MCF 10A (cell line): ENCODE measurements at regions of chr2 and their contacts with region 1.

Region 1: GRCh38 chr2:127526149-127527000 is at the start of gene IWS1:
- DNase-seq: peak; percentile 97
- H3K4me3 Mint-ChIP-seq: peak within 1 kb of the TSS; percentile 79
- H3K27ac Mint-ChIP-seq: peak within 1 kb of the TSS; percentile 95
- H3K4me1 Mint-ChIP-seq: peaks cover 17% of the 10 kb centered on the region
- H3K27me3 Mint-ChIP-seq: no peaks in the 10 kb centered on the region
- CTCF ChIP-seq: no peak
- total RNA-seq, gene IWS1: 56.8 and 57.0 TPM in 2 replicates

Region 2: DNA sequence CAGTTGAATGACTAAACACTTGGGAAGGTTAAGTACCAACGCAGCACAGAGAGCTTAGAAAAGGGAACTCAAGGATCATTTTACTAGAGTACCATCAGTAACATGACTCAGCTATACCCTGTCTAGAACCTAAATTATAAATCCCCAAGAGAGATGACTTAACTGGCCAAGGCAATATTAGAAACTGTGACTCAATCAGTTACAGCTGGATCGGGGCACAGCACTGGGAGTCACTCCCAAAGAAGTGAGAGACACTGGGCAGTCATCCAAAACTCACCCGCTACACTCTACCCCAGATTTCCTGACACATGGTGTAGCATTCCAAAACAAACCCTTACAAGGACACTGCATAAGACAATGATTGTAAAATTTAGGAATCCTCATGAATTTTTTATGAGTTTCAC is 17.7 kb before region 1 on chr2:
- CTCF ChIA-PET with region 1: interaction called, 5 read pairs
- POLR2A ChIA-PET with region 1: interaction called, 76 read pairs
- intact Hi-C with region 1: loop called (anchors 1 kb)
- DNase-seq: peak; percentile 98
- H3K4me3 Mint-ChIP-seq: no peak overlapping the region
- H3K27ac Mint-ChIP-seq: peak overlapping the region; percentile 32
- H3K4me1 Mint-ChIP-seq: peaks cover 23% of the 10 kb centered on the region
- H3K27me3 Mint-ChIP-seq: no peaks in the 10 kb centered on the region
- CTCF ChIP-seq: no peak

Region 3: GRCh38 chr2:127516031-127516762 is 10.2 kb before region 1 on chr2:
- CTCF ChIA-PET with region 1: interaction called, 4 read pairs
- POLR2A ChIA-PET with region 1: interaction called, 76 read pairs
- intact Hi-C with region 1: no loop called
- DNase-seq: no peak
- H3K4me3 Mint-ChIP-seq: no peak overlapping the region
- H3K27ac Mint-ChIP-seq: no peak overlapping the region
- H3K4me1 Mint-ChIP-seq: peaks cover 7% of the 10 kb centered on the region
- H3K27me3 Mint-ChIP-seq: no peaks in the 10 kb centered on the region
- CTCF ChIP-seq: no peak